Calu3 (cell line): ENCODE measurements at regions of chr11 and their contacts with region 1.

Region 1: GRCh38 chr11:113596658-113597057 is 109.5 kb downstream of the TMPRSS5 start:
- DNase-seq: no peak
- H3K4me3 Mint-ChIP-seq: no peak overlapping the region
- H3K27ac Mint-ChIP-seq: no peak overlapping the region
- H3K4me1 Mint-ChIP-seq: no peaks in the 10 kb centered on the region
- H3K27me3 Mint-ChIP-seq: no peaks in the 10 kb centered on the region
- CTCF ChIP-seq: no peak

Region 2: DNA sequence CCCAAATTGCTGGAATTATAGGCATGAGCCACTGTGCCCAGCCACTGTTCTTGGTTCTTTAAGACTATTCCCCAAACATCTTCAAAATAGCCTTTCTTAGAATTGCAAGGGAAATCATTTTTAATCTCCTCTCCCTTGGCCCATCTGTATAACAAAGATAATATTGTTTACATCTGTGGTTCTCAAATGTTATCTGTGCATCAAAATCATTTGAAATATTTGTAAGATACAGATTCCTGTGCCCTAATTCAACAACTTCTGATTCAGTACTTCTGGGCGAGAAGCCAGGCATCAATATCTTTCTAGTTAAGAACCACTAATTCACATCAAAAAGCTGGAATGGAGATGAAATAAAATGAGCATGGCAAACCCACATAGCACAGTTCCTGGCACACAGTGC is 26.5 kb after region 1 on chr11:
- CTCF ChIA-PET with region 1: no interaction called
- intact Hi-C with region 1: loop called (anchors 1 kb)
- DNase-seq: no peak
- H3K4me3 Mint-ChIP-seq: no peak overlapping the region
- H3K27ac Mint-ChIP-seq: no peak overlapping the region
- H3K4me1 Mint-ChIP-seq: no peaks in the 10 kb centered on the region
- H3K27me3 Mint-ChIP-seq: no peaks in the 10 kb centered on the region
- CTCF ChIP-seq: no peak

Region 3: GRCh38 chr11:113647108-113647507 is 50.5 kb after region 1 on chr11:
- CTCF ChIA-PET with region 1: no interaction called
- intact Hi-C with region 1: no loop called
- DNase-seq: no peak
- H3K4me3 Mint-ChIP-seq: no peak overlapping the region
- H3K27ac Mint-ChIP-seq: peak overlapping the region; percentile 41
- H3K4me1 Mint-ChIP-seq: peaks cover 8% of the 10 kb centered on the region
- H3K27me3 Mint-ChIP-seq: no peaks in the 10 kb centered on the region
- CTCF ChIP-seq: no peak